Activated CD4-positive, alpha-beta T cell treated with anti-CD3 and anti-CD28 coated beads for 36 hours (primary cell): ENCODE measurements at regions of chr10 and their contacts with region 1.

Region 1: DNA sequence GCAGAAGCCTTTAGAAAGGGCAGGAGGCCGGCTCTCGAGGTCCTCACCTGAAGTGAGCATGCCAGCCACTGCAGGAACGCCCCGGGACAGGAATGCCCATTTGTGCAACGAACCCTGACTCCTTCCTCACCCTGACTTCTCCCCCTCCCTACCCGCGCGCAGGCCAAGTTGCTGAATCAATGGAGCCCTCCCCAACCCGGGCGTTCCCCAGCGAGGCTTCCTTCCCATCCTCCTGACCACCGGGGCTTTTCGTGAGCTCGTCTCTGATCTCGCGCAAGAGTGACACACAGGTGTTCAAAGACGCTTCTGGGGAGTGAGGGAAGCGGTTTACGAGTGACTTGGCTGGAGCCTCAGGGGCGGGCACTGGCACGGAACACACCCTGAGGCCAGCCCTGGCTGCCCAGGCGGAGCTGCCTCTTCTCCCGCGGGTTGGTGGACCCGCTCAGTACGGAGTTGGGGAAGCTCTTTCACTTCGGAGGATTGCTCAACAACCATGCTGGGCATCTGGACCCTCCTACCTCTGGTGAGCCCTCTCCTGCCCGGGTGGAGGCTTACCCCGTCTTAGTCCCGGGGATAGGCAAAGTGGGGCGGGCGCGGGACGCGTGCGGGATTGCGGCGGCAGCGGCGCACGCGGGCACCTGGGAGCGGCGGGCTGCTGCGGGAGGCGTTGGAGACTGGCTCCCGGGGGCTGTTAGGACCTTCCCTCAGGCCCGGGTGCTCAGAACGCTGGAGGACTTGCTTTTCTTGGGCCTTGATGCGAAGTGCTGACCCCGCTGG is at the start of gene FAS:
- DNase-seq: peak; percentile 91
- ATAC-seq: peak; percentile 82
- H3K4me3 Mint-ChIP-seq: peak within 1 kb of the TSS; percentile 87
- H3K27ac Mint-ChIP-seq: peak within 1 kb of the TSS; percentile 94
- H3K4me1 Mint-ChIP-seq: peaks cover 61% of the 10 kb centered on the region
- H3K27me3 Mint-ChIP-seq: no peaks in the 10 kb centered on the region
- total RNA-seq, gene FAS: 34.1 to 34.9 TPM

Region 2: DNA sequence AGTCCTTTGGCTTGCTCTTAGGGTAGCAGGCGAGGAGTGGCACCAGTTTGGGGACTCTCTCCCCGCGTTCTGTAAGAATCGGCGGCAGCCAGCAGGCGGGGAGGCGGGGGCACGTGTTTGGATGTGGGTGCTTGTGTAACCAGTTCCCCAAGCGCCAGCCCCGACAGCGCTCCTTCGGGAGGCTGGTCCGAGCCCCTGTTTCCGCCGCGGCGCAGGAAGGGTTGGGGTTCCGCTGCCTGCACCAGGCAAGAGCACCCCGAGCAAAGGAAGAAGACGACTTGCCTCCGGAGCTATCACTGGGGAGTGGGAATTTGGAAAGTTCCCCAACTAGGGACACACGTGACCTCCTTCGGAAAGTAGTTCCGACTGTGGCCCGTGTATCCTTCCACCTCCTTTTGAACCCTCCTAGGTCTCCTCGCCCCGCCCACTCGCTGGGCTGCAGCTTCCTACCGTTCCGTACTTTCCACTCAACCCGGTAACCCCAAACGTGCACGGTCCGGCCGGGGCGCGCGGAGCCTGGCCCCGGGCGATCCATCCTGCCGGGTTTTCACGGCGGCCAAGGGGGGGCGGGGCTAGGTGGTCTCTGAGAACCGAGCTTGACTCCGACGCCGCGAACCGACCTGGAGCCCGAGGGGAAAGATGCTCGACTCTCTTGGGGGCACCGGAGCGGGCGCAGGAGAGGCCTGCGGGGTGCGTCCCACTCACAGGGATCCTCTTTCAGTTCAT is 1128.5 kb before region 1 on chr10:
- CTCF ChIA-PET with region 1: no interaction called
- POLR2A ChIA-PET with region 1: no interaction called
- intact Hi-C with region 1: loop called in 1 of 2 experiments (anchors 10 kb)
- DNase-seq: peak; percentile 96
- ATAC-seq: peak; percentile 66
- H3K4me3 Mint-ChIP-seq: peak overlapping the region; percentile 91
- H3K27ac Mint-ChIP-seq: peak overlapping the region; percentile 92
- H3K4me1 Mint-ChIP-seq: peaks cover 30% of the 10 kb centered on the region
- H3K27me3 Mint-ChIP-seq: no peaks in the 10 kb centered on the region

Region 3: GRCh38 chr10:88880282-88881076 is 110.1 kb before region 1 on chr10:
- CTCF ChIA-PET with region 1: no interaction called
- POLR2A ChIA-PET with region 1: interaction called, 4 read pairs
- intact Hi-C with region 1: loop called (anchors 1 to 5 kb)
- DNase-seq: peak; percentile 87
- ATAC-seq: peak; percentile 81
- H3K4me3 Mint-ChIP-seq: peak overlapping the region; percentile 97
- H3K27ac Mint-ChIP-seq: peak overlapping the region; percentile 98
- H3K4me1 Mint-ChIP-seq: peaks cover 65% of the 10 kb centered on the region
- H3K27me3 Mint-ChIP-seq: no peaks in the 10 kb centered on the region

Region 4: DNA sequence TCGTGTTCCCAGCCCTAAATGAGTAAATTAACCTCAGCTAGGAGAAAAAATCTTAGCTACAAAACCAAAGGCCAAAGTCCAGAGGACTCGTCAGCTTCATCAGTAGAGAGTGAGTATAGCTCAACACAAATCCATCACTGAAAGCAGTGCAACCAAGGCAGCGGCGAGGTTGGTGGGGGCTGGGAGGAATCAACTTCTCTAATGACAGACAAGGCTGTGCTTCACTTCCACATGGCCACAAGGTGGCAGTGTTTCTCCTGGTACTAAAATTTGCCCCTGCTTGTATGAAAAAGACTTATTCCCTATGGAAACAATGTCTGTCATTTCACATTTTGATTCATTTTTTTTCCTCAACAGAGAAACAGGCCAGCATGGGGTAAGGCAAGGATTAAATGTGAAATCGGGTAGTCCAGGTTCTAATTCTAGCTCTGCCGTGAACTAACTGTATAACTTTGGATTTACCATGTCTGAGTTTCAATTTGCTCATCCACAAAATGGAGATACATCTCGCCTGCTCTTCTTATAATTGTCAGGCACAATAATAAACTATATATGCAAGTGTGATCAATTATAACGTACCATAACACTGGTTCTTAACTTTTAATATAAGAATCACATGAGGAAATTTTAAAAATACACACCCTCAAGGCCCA is 39.3 kb after region 1 on chr10:
- CTCF ChIA-PET with region 1: interaction called, 21 read pairs
- POLR2A ChIA-PET with region 1: no interaction called
- intact Hi-C with region 1: no loop called
- DNase-seq: peak; percentile 85
- ATAC-seq: peak; percentile 64
- H3K4me3 Mint-ChIP-seq: no peak overlapping the region
- H3K27ac Mint-ChIP-seq: no peak overlapping the region
- H3K4me1 Mint-ChIP-seq: peaks cover 32% of the 10 kb centered on the region
- H3K27me3 Mint-ChIP-seq: no peaks in the 10 kb centered on the region

Region 5: GRCh38 chr10:89332123-89332633 is 341.6 kb after region 1 on chr10:
- CTCF ChIA-PET with region 1: interaction called, 3 read pairs
- POLR2A ChIA-PET with region 1: no interaction called
- intact Hi-C with region 1: loop called in 1 of 2 experiments (anchors 1 kb)
- DNase-seq: peak; percentile 41
- ATAC-seq: peak; percentile 54
- H3K4me3 Mint-ChIP-seq: peak overlapping the region; percentile 62
- H3K27ac Mint-ChIP-seq: peak overlapping the region; percentile 63
- H3K4me1 Mint-ChIP-seq: peaks cover 79% of the 10 kb centered on the region
- H3K27me3 Mint-ChIP-seq: peaks cover 8% of the 10 kb centered on the region

Region 6: DNA sequence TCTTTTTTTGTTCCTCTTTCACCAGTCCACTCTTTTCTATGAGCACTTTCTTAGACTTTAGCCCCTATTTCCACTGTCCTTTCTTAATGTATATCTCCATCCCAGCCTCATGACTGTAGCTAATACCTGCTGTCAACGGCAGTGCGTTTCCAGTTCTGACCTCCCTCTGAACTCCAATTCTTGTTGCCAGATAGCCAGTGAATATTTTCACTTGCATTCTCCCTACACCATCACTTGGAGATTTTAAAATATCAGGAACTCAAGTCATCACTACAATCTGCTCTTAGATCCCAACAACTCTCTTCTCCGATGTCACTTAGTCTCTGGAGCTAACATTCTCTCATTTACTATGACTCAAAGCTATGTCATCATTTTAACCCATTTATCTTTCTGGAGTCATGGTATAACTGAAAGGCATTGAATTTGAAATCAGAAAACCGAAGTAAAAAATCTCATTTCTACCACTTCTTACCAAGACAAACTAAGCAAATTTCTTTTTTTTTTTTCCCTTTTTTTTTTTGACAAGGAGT is 549.9 kb after region 1 on chr10:
- CTCF ChIA-PET with region 1: no interaction called
- POLR2A ChIA-PET with region 1: no interaction called
- intact Hi-C with region 1: no loop called
- DNase-seq: no peak
- ATAC-seq: no peak
- H3K4me3 Mint-ChIP-seq: no peak overlapping the region
- H3K27ac Mint-ChIP-seq: no peak overlapping the region
- H3K4me1 Mint-ChIP-seq: peaks cover 3% of the 10 kb centered on the region
- H3K27me3 Mint-ChIP-seq: peaks cover 40% of the 10 kb centered on the region

Region 7: GRCh38 chr10:90871766-90872647 is 1881.4 kb after region 1 on chr10 and contains the start of gene RPP30:
- CTCF ChIA-PET with region 1: no interaction called
- POLR2A ChIA-PET with region 1: no interaction called
- intact Hi-C with region 1: loop called in 1 of 2 experiments (anchors 10 kb)
- DNase-seq: peak; percentile 92
- ATAC-seq: peak; percentile 93
- H3K4me3 Mint-ChIP-seq: peak within 1 kb of the TSS; percentile 89
- H3K27ac Mint-ChIP-seq: peak within 1 kb of the TSS; percentile 98
- H3K4me1 Mint-ChIP-seq: peaks cover 34% of the 10 kb centered on the region
- H3K27me3 Mint-ChIP-seq: peaks cover 17% of the 10 kb centered on the region
- total RNA-seq, gene RPP30: 103 to 115 TPM